Activated CD4-positive, alpha-beta T cell treated with anti-CD3 and anti-CD28 coated beads for 36 hours (primary cell): ENCODE measurements at regions of chr16 and their contacts with region 1.

Region 1: GRCh38 chr16:23835390-23836077 is at the start of gene PRKCB:
- DNase-seq: peak; percentile 95
- ATAC-seq: peak; percentile 79
- H3K4me3 Mint-ChIP-seq: peak within 1 kb of the TSS; percentile 80
- H3K27ac Mint-ChIP-seq: peak within 1 kb of the TSS; percentile 59
- H3K4me1 Mint-ChIP-seq: peaks cover 54% of the 10 kb centered on the region
- H3K27me3 Mint-ChIP-seq: peaks cover 2% of the 10 kb centered on the region
- total RNA-seq, gene PRKCB: 57.5 to 83.8 TPM

Region 2: GRCh38 chr16:23869052-23869451 is 33.5 kb after region 1 on chr16:
- CTCF ChIA-PET with region 1: interaction called, 3 read pairs
- POLR2A ChIA-PET with region 1: no interaction called
- intact Hi-C with region 1: loop called in 1 of 2 experiments (anchors 2 kb)
- DNase-seq: peak; percentile 64
- ATAC-seq: peak; percentile 91
- H3K4me3 Mint-ChIP-seq: no peak overlapping the region
- H3K27ac Mint-ChIP-seq: peak overlapping the region; percentile 73
- H3K4me1 Mint-ChIP-seq: peaks cover 65% of the 10 kb centered on the region
- H3K27me3 Mint-ChIP-seq: no peaks in the 10 kb centered on the region